Naive thymus-derived CD4-positive, alpha-beta T cell (primary cell): ENCODE measurements at regions of chr16 and their contacts with region 1.

Region 1: GRCh38 chr16:82653550-82654511 is 27.1 kb downstream of the CDH13 start:
- DNase-seq: peak in 8 of 9 donors; percentile 11 to 54 (median 36)
- ATAC-seq: peak; percentile 70
- H3K4me3 ChIP-seq: peak overlapping the region; percentile 2
- H3K4me3 Mint-ChIP-seq: peak overlapping the region; percentile 27 to 77 (median 62)
- H3K27ac ChIP-seq: peak overlapping the region; percentile 57
- H3K27ac Mint-ChIP-seq: peak overlapping the region; percentile 48 to 95 (median 87)
- H3K4me1 ChIP-seq: peaks cover 71 to 88% of the 10 kb centered on the region in 2 donors
- H3K4me1 Mint-ChIP-seq: peaks cover 43 to 97% (median 84%) of the 10 kb centered on the region in 7 donors
- H3K27me3 ChIP-seq: no peaks in the 10 kb centered on the region
- H3K27me3 Mint-ChIP-seq: no peaks in the 10 kb centered on the region

Region 2: DNA sequence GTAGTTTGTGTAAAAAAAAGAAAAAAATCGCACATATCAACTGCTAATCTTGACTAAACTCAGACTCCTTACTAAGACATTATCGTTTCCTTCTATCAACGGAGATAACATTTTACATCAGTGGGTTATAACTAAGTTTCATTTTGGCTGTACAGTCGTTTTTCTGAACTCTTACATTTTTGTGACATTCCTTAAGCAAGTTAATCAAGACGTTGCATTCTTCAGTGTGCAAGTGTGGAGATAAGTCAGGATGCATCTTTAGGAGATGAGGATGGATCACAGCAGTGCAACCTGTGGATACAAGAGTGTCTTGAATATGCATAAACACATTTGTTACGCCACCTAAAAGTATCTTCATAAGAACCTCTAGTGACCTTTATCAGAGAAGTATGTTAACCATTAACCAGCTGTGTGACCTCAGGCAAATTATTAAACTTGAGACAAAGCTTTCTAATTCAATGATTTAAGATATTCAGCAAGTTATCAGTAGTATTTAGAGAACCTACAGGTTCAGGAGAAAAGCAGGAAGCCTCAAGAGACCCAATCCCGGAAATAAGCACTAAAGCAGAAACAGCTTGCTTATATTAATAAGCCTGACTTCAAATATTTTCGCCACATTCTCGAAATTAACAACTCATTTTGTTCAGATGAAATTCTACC is 1656.6 kb before region 1 on chr16:
- CTCF ChIA-PET with region 1: no interaction called
- POLR2A ChIA-PET with region 1: no interaction called
- intact Hi-C with region 1: loop called in 1 of 2 experiments (anchors 10 kb)
- DNase-seq: peak in 4 of 9 donors; percentile 21 to 33 (median 27)
- ATAC-seq: peak; percentile 49
- H3K4me3 ChIP-seq: peak overlapping the region; percentile 58
- H3K4me3 Mint-ChIP-seq: peak overlapping the region; percentile 79 to 97 (median 94)
- H3K27ac ChIP-seq: peak overlapping the region; percentile 71
- H3K27ac Mint-ChIP-seq: peak overlapping the region; percentile 92 to 96 (median 95)
- H3K4me1 ChIP-seq: peaks cover 4% of the 10 kb centered on the region in 2 donors
- H3K4me1 Mint-ChIP-seq: peaks cover 24 to 79% (median 67%) of the 10 kb centered on the region in 7 donors
- H3K27me3 ChIP-seq: no peaks in the 10 kb centered on the region
- H3K27me3 Mint-ChIP-seq: no peaks in the 10 kb centered on the region

Region 3: GRCh38 chr16:82639666-82640336 is 14.0 kb before region 1 on chr16:
- CTCF ChIA-PET with region 1: interaction called, 7 read pairs
- POLR2A ChIA-PET with region 1: no interaction called
- intact Hi-C with region 1: loop called (anchors 1 kb)
- DNase-seq: peak in 4 of 9 donors; percentile 14 to 50 (median 20)
- ATAC-seq: peak; percentile 76
- H3K4me3 ChIP-seq: no peak overlapping the region
- H3K4me3 Mint-ChIP-seq: no peak overlapping the region
- H3K27ac ChIP-seq: no peak overlapping the region
- H3K27ac Mint-ChIP-seq: no peak overlapping the region
- H3K4me1 ChIP-seq: peaks cover 0 to 4% of the 10 kb centered on the region in 2 donors
- H3K4me1 Mint-ChIP-seq: peaks cover 0 to 22% (median 0%) of the 10 kb centered on the region in 7 donors
- H3K27me3 ChIP-seq: no peaks in the 10 kb centered on the region
- H3K27me3 Mint-ChIP-seq: peaks cover 0 to 6% (median 4%) of the 10 kb centered on the region in 5 donors

Region 4: GRCh38 chr16:82671741-82672140 is 17.9 kb after region 1 on chr16:
- CTCF ChIA-PET with region 1: interaction called, 8 read pairs
- POLR2A ChIA-PET with region 1: interaction called, 3 read pairs
- intact Hi-C with region 1: loop called (anchors 1 to 2 kb)
- DNase-seq: peak in 1 of 9 donors; percentile 11
- ATAC-seq: no peak
- H3K4me3 ChIP-seq: no peak overlapping the region
- H3K4me3 Mint-ChIP-seq: no peak overlapping the region
- H3K27ac ChIP-seq: no peak overlapping the region
- H3K27ac Mint-ChIP-seq: no peak overlapping the region
- H3K4me1 ChIP-seq: no peaks in the 10 kb centered on the region
- H3K4me1 Mint-ChIP-seq: peaks cover 0 to 5% (median 0%) of the 10 kb centered on the region in 7 donors
- H3K27me3 ChIP-seq: no peaks in the 10 kb centered on the region
- H3K27me3 Mint-ChIP-seq: peaks cover 0 to 40% (median 0%) of the 10 kb centered on the region in 5 donors

Region 5: DNA sequence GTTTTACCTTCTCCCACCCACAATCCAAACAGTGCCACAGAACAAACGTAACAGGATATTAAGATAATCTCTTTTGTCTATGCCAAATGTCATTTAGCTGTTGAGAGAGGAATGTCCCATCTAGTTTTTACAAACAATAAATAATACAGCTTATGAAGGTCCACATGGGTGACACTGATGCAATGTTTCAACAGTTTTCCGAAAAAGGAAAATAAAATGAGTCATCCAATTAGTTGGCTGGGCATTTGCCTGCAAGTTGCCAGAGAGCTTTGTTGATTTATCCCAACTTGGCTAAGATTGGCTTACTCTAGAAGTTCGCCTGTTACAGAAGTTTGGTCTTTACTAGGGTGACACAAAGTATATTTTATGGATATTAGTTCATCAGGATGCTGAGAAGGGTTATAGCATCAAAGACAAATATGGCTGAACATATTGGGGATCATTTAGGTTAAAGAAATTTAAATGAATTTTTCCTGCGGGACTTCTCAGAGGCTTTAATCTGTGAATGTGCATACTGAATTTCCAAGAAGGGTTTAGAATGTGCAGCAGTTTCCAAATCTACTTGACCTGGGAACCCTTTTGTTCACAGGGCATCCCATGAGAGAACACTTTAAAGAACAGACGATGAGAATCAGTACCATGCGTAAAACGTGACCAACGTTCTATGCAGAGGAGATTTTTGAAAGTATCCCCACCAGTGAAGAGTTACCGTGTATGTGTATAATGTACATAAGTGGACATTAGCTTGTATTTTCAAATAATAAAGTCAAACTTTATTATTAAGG is 46.1 kb after region 1 on chr16:
- CTCF ChIA-PET with region 1: interaction called, 3 read pairs
- POLR2A ChIA-PET with region 1: no interaction called
- intact Hi-C with region 1: loop called in 1 of 2 experiments (anchors 5 kb)
- DNase-seq: no peak
- ATAC-seq: no peak
- H3K4me3 ChIP-seq: no peak overlapping the region
- H3K4me3 Mint-ChIP-seq: no peak overlapping the region
- H3K27ac ChIP-seq: no peak overlapping the region
- H3K27ac Mint-ChIP-seq: no peak overlapping the region
- H3K4me1 ChIP-seq: peaks cover 0 to 2% of the 10 kb centered on the region in 2 donors
- H3K4me1 Mint-ChIP-seq: peaks cover 0 to 25% (median 0%) of the 10 kb centered on the region in 7 donors
- H3K27me3 ChIP-seq: no peaks in the 10 kb centered on the region
- H3K27me3 Mint-ChIP-seq: peaks cover 2 to 31% (median 19%) of the 10 kb centered on the region in 5 donors

Region 6: DNA sequence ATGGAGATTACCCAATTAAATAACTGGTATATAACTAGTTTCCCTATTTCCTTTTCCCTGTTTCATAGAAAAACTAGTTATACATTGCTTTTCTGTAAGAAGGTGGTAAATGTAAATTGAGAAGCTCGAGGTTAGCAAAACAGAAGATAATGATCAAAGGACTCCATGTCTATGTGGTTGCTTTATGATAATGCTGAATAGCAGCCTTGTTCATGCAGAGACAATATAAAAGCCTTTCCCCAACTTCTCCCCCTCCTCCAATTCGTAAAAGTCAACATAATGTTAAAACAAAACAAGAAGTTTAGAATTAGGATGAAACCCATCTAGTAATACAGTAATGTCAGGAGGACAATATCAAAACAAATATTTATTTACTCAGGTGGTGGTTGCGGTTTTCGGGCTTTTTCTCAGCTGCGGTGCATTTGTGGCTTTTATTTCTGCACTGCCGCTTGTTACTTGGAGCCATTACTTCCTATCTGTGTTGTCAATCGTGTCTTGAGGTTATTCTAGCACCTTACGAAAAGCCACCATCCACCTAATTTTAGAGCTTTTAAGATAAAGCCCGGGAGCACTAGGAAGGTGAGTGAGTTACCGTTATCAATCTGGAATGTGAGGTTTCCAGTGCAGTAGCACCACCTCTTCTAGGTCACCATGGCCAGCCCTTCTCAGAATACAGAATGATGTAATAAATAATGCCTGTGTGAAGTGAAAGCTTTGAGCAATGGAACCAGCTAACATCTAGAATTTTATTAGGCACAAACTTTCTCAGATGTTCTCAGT is 270.4 kb after region 1 on chr16:
- CTCF ChIA-PET with region 1: no interaction called
- POLR2A ChIA-PET with region 1: no interaction called
- intact Hi-C with region 1: loop called in 1 of 2 experiments (anchors 10 kb)
- DNase-seq: no peak
- ATAC-seq: peak; percentile 45
- H3K4me3 ChIP-seq: no peak overlapping the region
- H3K4me3 Mint-ChIP-seq: peak overlapping the region in 1 of 10 donors; percentile 23
- H3K27ac ChIP-seq: no peak overlapping the region
- H3K27ac Mint-ChIP-seq: peak overlapping the region in 1 of 9 donors; percentile 49
- H3K4me1 ChIP-seq: peaks cover 0 to 15% of the 10 kb centered on the region in 2 donors
- H3K4me1 Mint-ChIP-seq: peaks cover 0 to 25% (median 0%) of the 10 kb centered on the region in 7 donors
- H3K27me3 ChIP-seq: no peaks in the 10 kb centered on the region
- H3K27me3 Mint-ChIP-seq: peaks cover 0 to 22% (median 5%) of the 10 kb centered on the region in 5 donors